Activated T-helper 1 cell treated with anti-CD3 and anti-CD28 coated beads, Interleukin-12 subunit alpha, Interleukin-12 subunit beta, Interleukin-2, Interleukin-4 antibody, amounts not matched to agents 30 ng/mL and 10 ng/mL and 1 ng/mL, durations not matched to agents 14 hours and 24 hours and 36 hours (primary cell): ENCODE measurements at regions of chr1 and their contacts with region 1.

Region 1: DNA sequence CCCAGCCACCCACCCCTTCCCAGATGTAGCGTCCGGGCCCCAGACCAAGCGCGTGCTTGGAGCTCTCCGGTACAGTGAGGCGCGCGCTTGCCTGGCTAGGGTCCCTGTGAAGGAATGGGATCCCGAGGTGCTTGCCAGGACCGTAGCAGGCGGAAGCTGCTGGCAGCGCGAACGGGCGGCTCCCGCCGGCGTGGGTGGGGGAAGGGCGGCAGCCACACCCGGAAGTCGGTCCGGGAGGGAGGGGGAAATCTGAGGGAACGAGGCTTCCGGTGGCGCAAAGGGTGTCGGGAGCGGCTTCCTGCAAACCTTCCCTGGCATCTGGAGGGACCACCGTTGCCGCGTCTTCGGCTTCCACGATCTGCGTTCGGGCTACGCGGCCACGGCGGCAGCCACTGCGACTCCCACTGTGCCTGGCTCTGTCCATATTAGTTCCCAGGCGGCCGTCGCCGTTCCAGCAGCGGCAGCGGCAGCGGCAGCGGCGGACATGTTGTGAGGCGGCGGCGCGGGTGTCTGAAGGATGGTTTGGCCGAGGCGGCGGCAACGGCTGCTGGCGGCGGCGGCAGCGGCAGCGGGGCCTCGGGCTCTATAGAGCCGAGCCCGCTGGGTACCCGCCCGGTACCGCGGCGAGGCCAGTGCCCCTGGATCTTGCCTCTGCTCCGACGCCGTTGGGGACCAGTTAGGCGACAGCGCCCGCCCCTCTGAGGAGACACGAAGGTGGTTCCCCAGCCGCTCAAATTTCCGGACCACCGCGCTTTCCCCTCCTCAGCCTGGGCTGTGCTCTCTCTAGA is at the start of gene DR1:
- DNase-seq: peak; percentile 90
- H3K4me3 Mint-ChIP-seq: peak within 1 kb of the TSS; percentile 100
- H3K27ac Mint-ChIP-seq: peak within 1 kb of the TSS; percentile 99
- H3K4me1 Mint-ChIP-seq: peaks cover 36% of the 10 kb centered on the region
- H3K27me3 Mint-ChIP-seq: no peaks in the 10 kb centered on the region
- total RNA-seq, gene DR1: 101 and 106 TPM in 2 replicates

Region 2: DNA sequence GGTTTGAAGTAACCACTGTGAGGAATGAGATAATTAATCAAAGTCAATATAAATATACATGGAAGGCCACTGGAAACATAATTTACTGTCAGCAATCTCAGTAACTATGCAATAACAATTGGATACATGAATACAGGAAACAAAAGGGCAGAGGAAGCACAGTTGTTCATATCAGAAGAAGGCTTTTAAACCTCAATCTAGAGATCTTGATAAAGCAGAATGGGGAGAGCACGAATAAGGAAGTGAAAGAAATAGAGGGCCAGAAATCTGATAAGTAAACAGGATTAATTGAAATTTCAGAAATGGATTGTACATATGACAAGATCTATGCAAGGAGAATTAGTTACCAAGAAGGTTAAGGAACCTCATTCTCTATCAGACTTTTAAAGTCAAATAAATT is 653.9 kb before region 1 on chr1:
- intact Hi-C with region 1: no loop called
- DNase-seq: no peak
- H3K4me3 Mint-ChIP-seq: no peak overlapping the region
- H3K27ac Mint-ChIP-seq: no peak overlapping the region
- H3K4me1 Mint-ChIP-seq: no peaks in the 10 kb centered on the region
- H3K27me3 Mint-ChIP-seq: peaks cover 6% of the 10 kb centered on the region

Region 3: GRCh38 chr1:92960395-92961130 is 385.3 kb before region 1 on chr1:
- intact Hi-C with region 1: loop called (anchors 5 kb)
- DNase-seq: peak; percentile 53
- H3K4me3 Mint-ChIP-seq: peak overlapping the region; percentile 90
- H3K27ac Mint-ChIP-seq: peak overlapping the region; percentile 97
- H3K4me1 Mint-ChIP-seq: peaks cover 41% of the 10 kb centered on the region
- H3K27me3 Mint-ChIP-seq: no peaks in the 10 kb centered on the region

Region 4: DNA sequence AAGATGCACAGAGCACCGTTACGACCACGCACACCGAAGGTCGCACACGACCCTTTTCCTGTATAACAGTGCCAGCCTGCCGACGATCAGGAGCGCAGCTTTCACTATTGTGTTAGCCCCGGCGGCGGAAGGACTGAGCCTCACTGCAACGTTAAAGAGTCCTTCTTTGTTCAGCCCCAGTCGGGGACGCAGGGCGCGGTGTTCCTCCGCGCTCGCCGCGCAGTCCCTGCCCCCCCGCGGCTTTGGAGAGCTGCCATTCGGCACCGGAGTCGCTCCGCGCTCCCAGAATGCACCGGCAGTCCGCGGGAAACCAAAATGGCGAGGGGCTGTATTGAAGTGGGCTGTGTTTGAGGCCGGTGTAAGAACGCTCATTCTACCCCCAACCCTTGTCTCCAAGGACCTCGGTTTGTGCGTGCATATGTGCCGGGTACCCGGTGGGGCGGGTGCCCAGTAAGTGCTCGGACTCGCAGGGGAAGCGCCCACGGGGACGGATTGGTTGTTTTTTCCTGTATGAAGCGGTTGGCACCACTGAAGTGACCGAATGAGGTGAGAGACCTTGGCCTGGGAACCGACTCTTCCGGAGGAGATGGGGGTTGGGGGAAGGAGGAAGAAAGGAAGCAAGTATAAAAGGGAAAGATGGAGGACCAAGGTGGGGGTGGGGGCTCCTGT is 266.7 kb before region 1 on chr1 and contains the start of gene MTF2:
- intact Hi-C with region 1: loop called (anchors 1 kb)
- DNase-seq: peak; percentile 93
- H3K4me3 Mint-ChIP-seq: peak within 1 kb of the TSS; percentile 98
- H3K27ac Mint-ChIP-seq: peak within 1 kb of the TSS; percentile 95
- H3K4me1 Mint-ChIP-seq: peaks cover 58% of the 10 kb centered on the region
- H3K27me3 Mint-ChIP-seq: no peaks in the 10 kb centered on the region
- total RNA-seq, gene MTF2: 68.4 and 71.0 TPM in 2 replicates

Region 5: GRCh38 chr1:93304716-93305138 is 41.1 kb before region 1 on chr1:
- intact Hi-C with region 1: loop called (anchors 1 kb)
- DNase-seq: peak; percentile 25
- H3K4me3 Mint-ChIP-seq: no peak overlapping the region
- H3K27ac Mint-ChIP-seq: no peak overlapping the region
- H3K4me1 Mint-ChIP-seq: peaks cover 5% of the 10 kb centered on the region
- H3K27me3 Mint-ChIP-seq: no peaks in the 10 kb centered on the region

Region 6: DNA sequence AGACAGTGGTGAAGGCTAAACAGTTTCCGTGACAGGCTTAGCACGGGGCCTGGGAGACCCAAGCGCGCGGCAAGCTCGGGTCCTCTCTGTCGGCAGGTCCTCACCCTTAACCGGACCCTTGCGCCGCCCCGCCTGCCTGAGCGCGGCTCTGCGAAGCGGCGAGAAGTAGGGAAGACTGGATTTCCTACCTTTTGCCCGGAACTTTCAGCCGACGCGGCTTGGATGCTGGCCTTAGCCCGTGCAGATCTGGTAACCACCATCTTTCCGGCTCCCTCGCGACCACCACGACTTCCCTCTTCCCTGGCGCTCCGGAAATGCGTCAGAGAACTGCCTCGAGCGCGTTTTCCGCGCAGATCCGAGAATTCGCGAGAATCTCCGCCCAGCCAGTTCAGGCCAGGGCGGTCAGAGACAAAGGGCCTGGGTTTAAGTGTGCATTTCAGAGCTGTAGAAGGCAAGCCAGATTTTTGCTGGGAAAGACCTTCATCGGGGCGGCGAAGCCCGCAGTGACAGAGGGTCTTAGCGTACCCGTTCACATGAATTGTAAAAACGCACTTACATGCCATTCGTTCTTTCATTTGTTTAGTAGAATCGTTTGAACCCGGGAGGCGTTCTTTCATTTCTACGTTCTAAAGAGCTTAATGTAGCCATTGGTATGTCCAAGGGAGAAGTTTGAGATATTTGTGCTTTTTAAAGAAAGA is 533.2 kb after region 1 on chr1 and contains the start of gene DNTTIP2:
- intact Hi-C with region 1: loop called (anchors 2 kb)
- DNase-seq: peak; percentile 86
- H3K4me3 Mint-ChIP-seq: peak within 1 kb of the TSS; percentile 95
- H3K27ac Mint-ChIP-seq: peak within 1 kb of the TSS; percentile 98
- H3K4me1 Mint-ChIP-seq: peaks cover 55% of the 10 kb centered on the region
- H3K27me3 Mint-ChIP-seq: no peaks in the 10 kb centered on the region
- total RNA-seq, gene DNTTIP2: 80.3 and 90.8 TPM in 2 replicates